SK-N-SH (cell line): ENCODE measurements at regions of chr7 and their contacts with region 1.

Region 1: GRCh38 chr7:81195033-81195432 is 276.2 kb upstream of the SEMA3C start:
- DNase-seq: no peak
- H3K4me3 ChIP-seq: no peak overlapping the region
- H3K27ac ChIP-seq: no peak overlapping the region
- H3K4me1 ChIP-seq: peaks cover 0 to 4% of the 10 kb centered on the region in 2 experiments; a peak in 1 of 4 replicates
- H3K27me3 ChIP-seq: no peaks in the 10 kb centered on the region
- CTCF ChIP-seq: no peak
- EP300 ChIP-seq: no peak
- RAD21 ChIP-seq: no peak

Region 2: DNA sequence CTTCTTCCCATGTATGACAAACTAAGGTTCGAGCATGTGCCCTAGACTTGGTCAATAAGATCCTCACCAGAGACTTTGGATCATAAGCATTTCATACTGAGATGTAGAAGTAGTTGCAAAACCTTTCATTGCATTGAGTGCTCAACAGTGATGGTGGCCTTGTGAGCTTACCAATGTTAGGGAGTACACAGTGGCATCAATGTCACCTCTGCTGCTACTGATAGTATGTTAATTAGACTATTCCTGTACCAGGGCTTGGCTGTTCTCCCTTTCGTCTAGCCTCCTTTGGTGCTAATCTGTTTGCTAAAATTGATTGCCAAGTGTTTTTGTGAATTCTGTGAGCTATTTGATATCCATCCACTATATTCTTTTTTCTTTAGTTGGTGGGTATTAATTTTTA is 11.7 kb before region 1 on chr7:
- CTCF ChIA-PET with region 1: interaction called, 10 read pairs
- POLR2A ChIA-PET with region 1: no interaction called
- DNase-seq: no peak
- H3K4me3 ChIP-seq: no peak overlapping the region
- H3K27ac ChIP-seq: no peak overlapping the region
- H3K4me1 ChIP-seq: no peaks in the 10 kb centered on the region
- H3K27me3 ChIP-seq: no peaks in the 10 kb centered on the region
- CTCF ChIP-seq: no peak
- EP300 ChIP-seq: no peak
- RAD21 ChIP-seq: no peak

Region 3: DNA sequence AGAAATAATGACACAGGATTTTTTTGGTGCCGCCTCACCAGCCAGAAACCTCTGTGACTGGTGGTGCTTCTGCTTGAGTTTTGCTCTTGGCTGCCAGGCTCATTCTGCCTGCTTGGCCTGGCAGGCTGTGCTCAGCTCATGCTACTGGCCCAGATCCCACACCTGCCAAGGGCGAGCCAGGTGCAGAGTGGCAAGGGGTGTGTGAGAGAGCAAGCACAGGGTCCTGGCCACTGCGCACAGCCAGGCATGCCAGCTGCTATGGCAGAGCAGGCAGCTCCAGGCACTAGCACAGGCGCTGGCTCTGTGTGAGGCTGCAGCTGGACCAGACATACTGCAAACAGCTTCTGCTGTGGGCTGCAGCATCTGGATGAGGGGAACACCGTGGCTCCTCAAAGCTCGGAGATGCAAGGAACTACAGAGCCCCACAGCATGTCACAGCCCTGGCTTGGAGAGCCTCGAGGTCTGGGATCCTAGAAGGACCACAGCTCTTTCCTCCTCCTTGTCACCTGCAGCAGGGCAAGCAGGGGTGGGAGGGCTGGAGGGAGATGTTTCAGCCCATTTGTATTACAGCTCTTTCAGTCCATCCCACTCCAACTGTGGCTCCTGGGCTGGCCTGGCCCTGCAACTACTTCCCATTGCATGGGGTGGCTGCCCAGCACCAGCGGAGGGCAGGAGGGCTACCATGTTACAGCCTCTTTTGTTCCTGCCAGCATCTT is 37.2 kb after region 1 on chr7:
- CTCF ChIA-PET with region 1: no interaction called
- POLR2A ChIA-PET with region 1: no interaction called
- DNase-seq: peak; percentile 26
- H3K4me3 ChIP-seq: no peak overlapping the region; a peak in 1 of 4 replicates
- H3K27ac ChIP-seq: peak overlapping the region in 1 of 2 experiments; percentile 82; a peak in 2 of 4 replicates
- H3K4me1 ChIP-seq: peaks cover 0 to 18% of the 10 kb centered on the region in 2 experiments; a peak in 2 of 4 replicates
- H3K27me3 ChIP-seq: no peaks in the 10 kb centered on the region
- CTCF ChIP-seq: no peak
- EP300 ChIP-seq: no peak
- RAD21 ChIP-seq: no peak